Posterior vena cava (tissue), 2 donors: ENCODE measurements at regions of chr9 and their contacts with region 1.

Region 1: DNA sequence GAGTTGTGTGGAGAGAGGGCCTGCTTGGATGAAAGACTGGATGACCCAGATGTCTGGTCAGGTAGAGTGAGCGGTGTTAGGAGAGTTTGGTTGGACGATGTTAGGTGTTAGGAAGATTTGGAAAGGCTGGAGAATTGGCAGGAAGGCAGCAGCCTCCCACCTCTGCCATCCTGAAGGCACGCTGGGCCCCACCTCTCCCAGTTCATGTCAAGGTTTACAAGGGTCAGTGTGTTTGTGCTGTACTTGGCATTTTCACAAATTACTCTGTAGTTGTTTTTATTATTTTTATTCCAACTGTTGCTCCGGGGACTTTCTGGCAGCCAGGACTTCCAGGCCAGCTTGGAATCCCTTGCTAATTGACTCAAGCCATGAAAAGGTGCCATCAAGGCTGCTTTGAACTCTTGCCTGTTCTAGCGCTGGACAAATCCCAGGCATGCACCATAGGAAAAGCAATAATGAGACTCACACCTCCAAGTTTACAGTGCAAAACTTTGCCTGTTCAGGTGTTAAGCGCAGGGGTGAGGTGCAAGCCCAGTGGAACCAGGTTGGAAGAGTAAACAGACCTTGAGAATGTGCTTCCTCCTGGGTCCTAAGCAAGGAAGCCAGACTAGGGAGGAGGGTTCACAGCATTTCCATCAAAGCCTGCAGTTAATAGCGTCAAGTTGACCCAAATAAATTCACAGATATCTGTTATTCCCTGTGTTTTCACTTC is 41.7 kb upstream of the KLF9 start:
- DNase-seq: no peak

Region 2: DNA sequence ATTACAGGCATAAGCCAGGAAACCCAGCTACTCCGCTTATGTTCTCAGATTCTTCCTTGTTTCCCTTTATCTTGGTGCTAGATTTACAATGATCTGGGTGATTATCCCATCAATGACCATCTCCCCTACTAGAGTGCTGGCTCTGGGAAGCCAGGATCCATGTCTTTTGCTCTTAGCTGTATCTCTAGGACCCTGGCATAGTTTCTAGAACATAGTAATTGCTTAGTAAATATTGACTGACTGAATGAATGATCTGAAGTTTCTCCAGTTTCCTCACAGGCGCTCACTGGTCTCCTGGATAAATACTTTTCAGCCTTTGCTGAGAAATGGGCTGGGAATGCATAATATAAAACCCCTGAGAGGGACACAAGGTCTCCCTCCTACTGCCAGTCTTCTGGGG is 18.3 kb after region 1 on chr9:
- intact Hi-C with region 1: loop called in 1 of 2 experiments (anchors 1 kb)
- DNase-seq: no peak

Region 3: DNA sequence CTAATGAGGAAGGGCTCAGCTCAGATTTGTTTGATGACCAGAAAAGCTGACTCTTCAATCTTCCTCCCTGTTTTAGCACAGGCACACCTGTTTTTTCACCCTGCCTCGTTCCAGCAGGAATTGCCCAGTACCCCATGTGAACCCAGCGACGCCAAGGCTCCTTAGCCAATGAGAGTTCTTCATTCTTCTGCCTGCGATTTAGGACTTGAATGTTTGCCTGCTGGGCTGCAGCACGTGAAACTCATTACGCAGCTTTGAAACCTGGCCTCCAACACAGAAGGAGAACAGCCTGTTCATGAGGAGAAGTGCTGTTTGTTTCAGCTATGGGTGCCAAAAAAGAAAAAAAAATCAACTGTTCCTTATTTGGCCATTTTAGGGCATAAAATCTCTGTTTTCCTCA is 349.8 kb after region 1 on chr9:
- intact Hi-C with region 1: no loop called
- DNase-seq: no peak